Mucosa of descending colon (tissue), 3 donors: ENCODE measurements at regions of chr7 and their contacts with region 1.

Region 1: GRCh38 chr7:92843034-92843760 is 6.8 kb upstream of the CDK6 start:
- DNase-seq: no peak
- ATAC-seq: no peak
- H3K4me3 ChIP-seq: no peak overlapping the region
- H3K4me1 ChIP-seq: no peaks in the 10 kb centered on the region
- CTCF ChIP-seq: no peak

Region 2: DNA sequence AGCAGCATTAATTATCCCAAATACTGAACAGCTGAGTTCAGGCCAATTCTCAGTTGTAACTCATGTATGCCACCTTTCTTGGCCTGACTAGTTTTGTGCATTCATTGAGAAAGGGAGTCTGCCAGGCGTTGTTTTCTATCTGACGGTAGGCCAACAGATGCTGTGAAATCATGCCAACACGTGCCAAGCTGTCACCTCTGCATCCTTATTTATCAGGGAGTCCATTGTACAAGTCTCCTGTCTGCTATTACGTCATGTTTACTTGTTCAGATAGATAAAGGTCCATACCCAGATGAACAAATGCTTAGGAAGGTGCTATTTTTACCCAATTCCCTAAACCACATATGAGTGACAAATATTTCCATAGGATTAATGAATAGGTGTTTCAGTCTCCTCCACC is 120.4 kb after region 1 on chr7:
- intact Hi-C with region 1: no loop called
- DNase-seq: no peak
- ATAC-seq: no peak
- H3K4me3 ChIP-seq: no peak overlapping the region
- H3K4me1 ChIP-seq: no peaks in the 10 kb centered on the region
- CTCF ChIP-seq: no peak

Region 3: GRCh38 chr7:92973974-92974373 is 130.8 kb after region 1 on chr7:
- intact Hi-C with region 1: no loop called
- DNase-seq: no peak
- ATAC-seq: no peak
- H3K4me3 ChIP-seq: no peak overlapping the region
- H3K4me1 ChIP-seq: no peaks in the 10 kb centered on the region
- CTCF ChIP-seq: no peak

Region 4: DNA sequence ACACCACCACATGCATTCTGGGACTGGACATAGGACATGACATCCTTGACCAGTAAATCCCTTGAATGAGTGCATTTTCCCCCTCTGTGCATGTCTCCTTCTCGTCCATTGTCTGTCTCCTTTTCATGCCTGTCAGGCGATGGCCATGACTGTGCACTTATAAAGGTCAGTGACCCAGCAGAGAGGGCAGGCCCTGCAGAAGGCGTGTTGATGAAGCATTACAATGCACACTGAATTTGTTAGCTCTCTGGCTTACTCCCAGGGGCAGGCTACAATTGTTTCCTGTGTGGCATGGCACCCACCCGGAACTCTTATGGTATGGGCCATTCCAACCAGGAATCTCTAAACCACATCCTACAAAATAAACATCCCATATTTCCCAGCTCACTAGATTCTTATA is 203.4 kb after region 1 on chr7:
- intact Hi-C with region 1: loop called in 1 of 2 experiments (anchors 5 kb)
- DNase-seq: no peak
- ATAC-seq: peak; percentile 48
- H3K4me3 ChIP-seq: no peak overlapping the region
- H3K4me1 ChIP-seq: no peaks in the 10 kb centered on the region
- CTCF ChIP-seq: no peak